ENCODE measurements at regions of chr1 and their contacts with region 1.

Region 1: DNA sequence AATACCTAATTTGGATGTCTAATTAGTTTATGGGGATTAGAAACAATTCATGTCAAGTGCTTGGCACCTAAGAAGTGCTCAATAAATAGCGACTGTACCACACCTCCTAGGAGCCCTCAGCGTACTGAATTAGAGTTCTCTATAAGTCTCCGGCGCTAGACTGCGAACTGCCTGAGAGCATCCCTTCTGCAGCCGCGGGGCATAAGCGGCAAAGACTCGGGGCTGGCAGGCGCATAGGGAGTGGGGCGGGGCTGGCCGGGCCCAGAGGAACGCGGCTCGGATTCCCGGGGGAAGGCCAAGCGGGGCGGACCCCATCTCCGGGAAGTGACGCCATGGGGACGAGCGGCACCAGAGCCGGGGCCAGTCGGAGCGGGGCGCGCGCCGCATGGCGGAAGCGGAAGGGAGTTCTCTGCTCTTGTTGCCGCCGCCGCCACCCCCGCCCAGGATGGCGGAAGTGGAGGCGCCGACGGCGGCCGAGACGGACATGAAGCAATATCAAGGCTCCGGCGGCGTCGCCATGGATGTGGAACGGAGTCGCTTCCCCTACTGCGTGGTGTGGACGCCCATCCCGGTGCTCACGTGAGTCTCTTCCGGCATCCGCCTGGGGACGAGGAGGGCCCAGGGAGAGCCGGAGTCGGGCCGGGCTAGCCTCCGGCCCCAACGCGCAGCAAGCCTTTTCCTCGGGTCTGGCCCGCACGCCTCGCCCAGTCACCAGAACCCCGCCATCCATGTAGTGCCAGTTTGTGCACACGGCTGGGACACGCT is at the start of gene TMEM222:
- DNase-seq: peak; percentile 97
- H3K4me3 ChIP-seq: peak within 1 kb of the TSS; percentile 47 to 82 (median 68)
- H3K27ac ChIP-seq: peak within 1 kb of the TSS; percentile 77
- H3K4me1 ChIP-seq: peaks cover 11% of the 10 kb centered on the region
- H3K27me3 ChIP-seq: no peaks in the 10 kb centered on the region
- CTCF ChIP-seq: no peak
- POLR2A ChIP-seq: peak; percentile 94
- total RNA-seq, gene TMEM222: 43.1 and 45.8 TPM in 2 replicates

Region 2: DNA sequence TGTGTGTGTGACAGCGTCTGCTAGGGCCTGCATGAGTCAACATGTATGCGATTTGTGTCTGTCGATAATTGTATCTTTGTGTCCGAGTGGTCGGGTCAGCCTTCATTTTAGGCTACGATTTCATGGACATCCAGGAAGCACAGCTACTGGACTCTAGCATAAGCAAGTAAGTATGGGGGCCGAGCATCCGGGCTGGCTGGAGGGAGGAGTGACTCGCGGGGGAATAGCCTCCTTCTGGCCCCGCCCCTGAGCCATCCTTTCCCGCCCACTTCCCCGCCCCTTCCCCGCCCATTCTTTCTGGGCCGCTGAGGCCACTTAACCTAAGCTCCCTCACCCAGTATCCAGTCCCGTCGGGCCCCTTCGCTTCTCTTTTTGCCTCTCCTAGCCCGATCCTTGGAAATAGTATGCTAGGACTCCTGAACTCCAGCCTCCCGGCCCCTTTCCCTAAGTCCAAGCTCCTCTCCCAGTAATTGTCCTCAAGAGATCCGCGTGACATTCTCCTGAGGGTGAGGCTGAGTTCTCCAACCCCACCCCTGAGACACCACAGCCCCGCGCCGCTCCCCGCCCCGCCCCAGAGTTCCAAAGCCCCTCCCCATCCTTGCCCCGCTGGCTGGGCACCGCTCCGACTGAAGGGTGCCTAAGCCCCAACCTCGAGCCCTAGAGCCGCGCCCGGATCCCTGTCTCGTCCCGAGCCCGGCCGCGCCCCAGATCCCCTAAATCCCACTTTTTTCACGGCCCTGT is 43.5 kb after region 1 on chr1:
- CTCF ChIA-PET with region 1: interaction called, 4 read pairs
- POLR2A ChIA-PET with region 1: no interaction called
- dilution Hi-C with region 1: no loop called
- intact Hi-C with region 1: loop called (anchors 1 kb)
- DNase-seq: peak; percentile 91
- H3K4me3 ChIP-seq: peak overlapping the region; percentile 62 to 81 (median 79)
- H3K27ac ChIP-seq: peak overlapping the region; percentile 85
- H3K4me1 ChIP-seq: peaks cover 15% of the 10 kb centered on the region
- H3K27me3 ChIP-seq: no peaks in the 10 kb centered on the region
- CTCF ChIP-seq: no peak
- POLR2A ChIP-seq: peak; percentile 41

Region 3: GRCh38 chr1:27416387-27417111 is 94.6 kb after region 1 on chr1:
- CTCF ChIA-PET with region 1: no interaction called
- POLR2A ChIA-PET with region 1: no interaction called
- dilution Hi-C with region 1: no loop called
- intact Hi-C with region 1: no loop called
- DNase-seq: peak; percentile 80
- H3K4me3 ChIP-seq: no peak overlapping the region
- H3K27ac ChIP-seq: no peak overlapping the region
- H3K4me1 ChIP-seq: peaks cover 5% of the 10 kb centered on the region
- H3K27me3 ChIP-seq: no peaks in the 10 kb centered on the region
- CTCF ChIP-seq: peak; percentile 75 to 76
- POLR2A ChIP-seq: no peak

Region 4: DNA sequence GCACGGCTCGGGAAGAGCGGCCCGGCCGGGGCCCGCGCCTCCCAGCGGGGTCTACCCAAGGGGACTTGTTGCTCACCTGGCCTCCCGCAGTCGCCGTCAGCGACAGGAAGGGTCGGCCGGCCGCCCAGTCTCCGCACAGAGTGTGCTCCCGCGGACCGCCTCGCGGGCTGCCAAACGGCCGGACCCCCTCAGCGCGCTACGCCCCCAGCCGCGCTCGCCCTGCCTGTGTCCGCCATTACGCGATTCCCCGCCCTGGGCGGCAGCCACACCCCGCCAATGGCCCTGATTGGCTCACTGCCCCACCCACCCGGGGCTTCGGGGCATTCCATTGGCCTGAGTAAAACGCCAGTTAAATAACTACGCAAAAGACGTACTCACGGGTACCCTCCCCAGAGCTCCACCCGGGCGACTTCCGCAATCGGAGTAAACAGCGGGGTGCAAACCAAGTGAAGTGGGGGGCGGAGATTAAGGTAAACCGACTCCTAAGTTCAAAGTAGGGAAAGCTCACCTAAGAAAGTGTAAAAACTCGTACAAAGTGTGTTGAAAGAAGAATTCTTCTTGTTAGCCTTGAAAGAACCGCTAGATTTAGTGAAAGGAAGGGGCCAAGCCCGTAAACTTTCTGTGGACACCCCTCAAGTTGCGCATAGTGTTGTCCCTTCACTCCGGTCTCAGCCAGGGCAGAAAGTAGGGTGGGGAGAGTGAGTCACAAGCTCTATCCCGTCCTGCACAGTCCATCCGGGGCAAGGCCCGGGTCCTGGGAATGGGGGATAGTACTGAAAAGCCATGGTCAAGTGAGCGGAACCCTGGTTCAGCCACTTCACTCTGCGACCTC is 168.1 kb after region 1 on chr1 and contains the start of gene WASF2:
- CTCF ChIA-PET with region 1: no interaction called
- POLR2A ChIA-PET with region 1: no interaction called
- dilution Hi-C with region 1: no loop called
- intact Hi-C with region 1: loop called (anchors 1 kb)
- DNase-seq: peak; percentile 98
- H3K4me3 ChIP-seq: peak within 1 kb of the TSS; percentile 42 to 83 (median 80)
- H3K27ac ChIP-seq: peak within 1 kb of the TSS; percentile 95
- H3K4me1 ChIP-seq: peaks cover 14% of the 10 kb centered on the region
- H3K27me3 ChIP-seq: no peaks in the 10 kb centered on the region
- CTCF ChIP-seq: no peak
- POLR2A ChIP-seq: peak; percentile 74
- total RNA-seq, gene WASF2: 169 and 172 TPM in 2 replicates